ENCODE measurements at regions of chr17 and their contacts with region 1.

Region 1: GRCh38 chr17:28540231-28540630 is 12.2 kb downstream of the UNC119 start:
- DNase-seq: no peak
- ATAC-seq: no peak
- H3K4me3 ChIP-seq: no peak overlapping the region
- H3K27ac ChIP-seq: no peak overlapping the region
- H3K4me1 ChIP-seq: no peaks in the 10 kb centered on the region
- H3K27me3 ChIP-seq: no peaks in the 10 kb centered on the region
- CTCF ChIP-seq: no peak
- EP300 ChIP-seq: no peak
- POLR2A ChIP-seq: no peak
- RAD21 ChIP-seq: no peak

Region 2: DNA sequence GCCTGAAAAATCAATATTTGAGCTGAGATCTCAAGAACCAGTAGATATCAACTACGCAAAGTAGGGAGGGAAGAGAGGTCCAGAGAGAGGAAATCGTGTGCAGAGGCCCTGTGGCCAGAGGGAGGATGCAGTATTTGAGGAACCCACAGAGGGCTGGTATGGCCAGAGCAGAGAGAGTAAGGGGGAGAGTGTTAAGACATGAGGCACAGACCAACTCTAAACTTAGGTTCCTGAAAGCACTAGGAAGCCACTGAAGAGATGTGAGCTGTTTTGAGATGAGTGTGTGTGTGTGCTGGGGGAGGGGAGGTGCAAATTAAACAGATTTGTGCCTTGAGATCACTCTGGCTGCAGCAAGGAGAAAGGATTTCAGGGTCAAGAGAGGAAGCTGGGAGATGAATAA is 55.9 kb before region 1 on chr17:
- CTCF ChIA-PET with region 1: interaction called, 7 read pairs
- POLR2A ChIA-PET with region 1: interaction called, 3 read pairs
- RAD21 ChIA-PET with region 1: interaction called, 3 read pairs
- SMC1A ChIA-PET with region 1: interaction called, 15 read pairs
- in situ Hi-C with region 1: no loop called
- intact Hi-C with region 1: no loop called
- DNase-seq: peak; percentile 79
- ATAC-seq: peak; percentile 98
- H3K4me3 ChIP-seq: peak overlapping the region; percentile 33; the same call in 1 of the 2 replicates
- H3K27ac ChIP-seq: peak overlapping the region; percentile 89
- H3K4me1 ChIP-seq: peaks cover 25% of the 10 kb centered on the region
- H3K27me3 ChIP-seq: no peaks in the 10 kb centered on the region
- CTCF ChIP-seq: no peak
- EP300 ChIP-seq: peak; percentile 39 to 45; a peak in 1 of 4 replicates
- POLR2A ChIP-seq: peak; percentile 42; the same call in 1 of the 2 replicates
- RAD21 ChIP-seq: 0 out of 2 replicates have a peak, but pooled peaks have one; percentile 10

Region 3: GRCh38 chr17:28500712-28501379 is 39.4 kb before region 1 on chr17:
- CTCF ChIA-PET with region 1: interaction called, 316 read pairs
- POLR2A ChIA-PET with region 1: interaction called, 6 read pairs
- RAD21 ChIA-PET with region 1: interaction called, 26 read pairs
- SMC1A ChIA-PET with region 1: interaction called, 32 read pairs
- in situ Hi-C with region 1: loop called (anchors 5 kb)
- intact Hi-C with region 1: loop called (anchors 2 kb)
- DNase-seq: peak; percentile 63
- ATAC-seq: peak; percentile 93
- H3K4me3 ChIP-seq: peak overlapping the region; percentile 59
- H3K27ac ChIP-seq: peak overlapping the region; percentile 87
- H3K4me1 ChIP-seq: peaks cover 26% of the 10 kb centered on the region
- H3K27me3 ChIP-seq: no peaks in the 10 kb centered on the region
- CTCF ChIP-seq: no peak
- EP300 ChIP-seq: no peak
- POLR2A ChIP-seq: peak; percentile 47; the same call in 1 of the 2 replicates
- RAD21 ChIP-seq: no peak

Region 4: DNA sequence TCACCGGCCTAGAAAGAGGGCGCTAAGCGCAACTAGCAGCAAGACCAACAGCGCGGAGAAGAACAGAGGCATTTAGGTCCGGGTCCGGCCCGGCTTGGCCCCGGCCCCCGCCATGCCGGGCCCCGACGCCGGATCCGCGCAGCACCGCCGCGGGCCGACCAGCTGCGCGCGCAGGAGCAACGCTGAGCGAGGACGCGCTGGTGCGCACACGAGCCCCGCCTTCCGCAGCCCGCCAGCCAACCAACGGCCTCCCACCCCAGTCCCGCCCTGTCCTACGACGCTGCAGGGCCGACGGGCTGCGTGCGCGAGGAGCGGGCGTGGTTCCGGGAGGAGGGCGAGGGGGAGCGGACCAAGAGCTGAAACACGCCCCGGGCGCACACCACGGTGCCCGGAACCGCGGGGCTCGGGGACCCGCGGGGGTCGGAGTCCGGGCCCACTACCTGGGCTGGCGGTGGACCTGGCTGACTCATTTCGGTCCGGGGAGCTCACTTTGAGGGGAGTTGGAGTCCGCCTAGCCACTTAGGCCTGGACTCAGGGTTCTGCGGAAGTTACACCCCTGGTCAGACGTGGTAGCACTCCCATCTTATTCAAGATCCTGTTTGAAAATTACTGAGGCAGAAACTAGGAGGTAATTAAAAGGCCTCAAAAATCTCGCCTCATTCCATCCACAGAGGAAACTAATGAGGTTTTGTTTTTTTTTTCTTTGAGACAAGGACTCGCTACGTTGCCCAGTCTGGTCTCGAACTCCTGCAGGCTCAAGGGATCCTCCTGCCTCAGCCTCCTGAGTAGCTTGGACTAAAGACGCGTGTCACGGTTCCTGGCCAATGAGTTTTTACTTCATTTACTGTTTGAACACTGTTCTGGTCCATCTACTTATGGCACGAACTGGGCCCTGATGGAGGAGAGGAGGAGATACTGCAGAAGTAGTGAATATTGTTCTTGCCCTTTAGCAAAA is 105.0 kb after region 1 on chr17 and contains the start of gene BLTP2:
- CTCF ChIA-PET with region 1: no interaction called
- POLR2A ChIA-PET with region 1: no interaction called
- RAD21 ChIA-PET with region 1: no interaction called
- SMC1A ChIA-PET with region 1: no interaction called
- in situ Hi-C with region 1: no loop called
- intact Hi-C with region 1: no loop called
- DNase-seq: peak; percentile 82
- ATAC-seq: peak; percentile 97
- H3K4me3 ChIP-seq: peak within 1 kb of the TSS; percentile 85
- H3K27ac ChIP-seq: peak within 1 kb of the TSS; percentile 85
- H3K4me1 ChIP-seq: peaks cover 14% of the 10 kb centered on the region
- H3K27me3 ChIP-seq: no peaks in the 10 kb centered on the region
- CTCF ChIP-seq: no peak
- EP300 ChIP-seq: no peak
- POLR2A ChIP-seq: peak; percentile 86
- RAD21 ChIP-seq: no peak
- polyA plus RNA-seq, gene BLTP2: 14.2 to 16.9 TPM

Region 5: GRCh38 chr17:28908640-28909167 is 368.5 kb after region 1 on chr17:
- CTCF ChIA-PET with region 1: no interaction called
- POLR2A ChIA-PET with region 1: interaction called, 10 read pairs
- RAD21 ChIA-PET with region 1: no interaction called
- SMC1A ChIA-PET with region 1: no interaction called
- in situ Hi-C with region 1: no loop called
- intact Hi-C with region 1: no loop called
- DNase-seq: no peak
- ATAC-seq: no peak
- H3K4me3 ChIP-seq: no peak overlapping the region
- H3K27ac ChIP-seq: no peak overlapping the region
- H3K4me1 ChIP-seq: no peaks in the 10 kb centered on the region
- H3K27me3 ChIP-seq: no peaks in the 10 kb centered on the region
- CTCF ChIP-seq: no peak
- EP300 ChIP-seq: no peak
- POLR2A ChIP-seq: no peak
- RAD21 ChIP-seq: no peak

Measured in GM12878 (cell line).